ENCODE measurements at regions of chr21 and their contacts with region 1.

Region 1: GRCh38 chr21:33924079-33924765 is 8.6 kb upstream of the ATP5PO start:
- DNase-seq: no peak
- H3K4me3 ChIP-seq: no peak overlapping the region
- CTCF ChIP-seq: peak; percentile 88

Region 2: GRCh38 chr21:33899199-33899598 is 25.0 kb before region 1 on chr21:
- CTCF ChIA-PET with region 1: no interaction called
- POLR2A ChIA-PET with region 1: no interaction called
- DNase-seq: no peak
- H3K4me3 ChIP-seq: no peak overlapping the region
- CTCF ChIP-seq: no peak

Region 3: DNA sequence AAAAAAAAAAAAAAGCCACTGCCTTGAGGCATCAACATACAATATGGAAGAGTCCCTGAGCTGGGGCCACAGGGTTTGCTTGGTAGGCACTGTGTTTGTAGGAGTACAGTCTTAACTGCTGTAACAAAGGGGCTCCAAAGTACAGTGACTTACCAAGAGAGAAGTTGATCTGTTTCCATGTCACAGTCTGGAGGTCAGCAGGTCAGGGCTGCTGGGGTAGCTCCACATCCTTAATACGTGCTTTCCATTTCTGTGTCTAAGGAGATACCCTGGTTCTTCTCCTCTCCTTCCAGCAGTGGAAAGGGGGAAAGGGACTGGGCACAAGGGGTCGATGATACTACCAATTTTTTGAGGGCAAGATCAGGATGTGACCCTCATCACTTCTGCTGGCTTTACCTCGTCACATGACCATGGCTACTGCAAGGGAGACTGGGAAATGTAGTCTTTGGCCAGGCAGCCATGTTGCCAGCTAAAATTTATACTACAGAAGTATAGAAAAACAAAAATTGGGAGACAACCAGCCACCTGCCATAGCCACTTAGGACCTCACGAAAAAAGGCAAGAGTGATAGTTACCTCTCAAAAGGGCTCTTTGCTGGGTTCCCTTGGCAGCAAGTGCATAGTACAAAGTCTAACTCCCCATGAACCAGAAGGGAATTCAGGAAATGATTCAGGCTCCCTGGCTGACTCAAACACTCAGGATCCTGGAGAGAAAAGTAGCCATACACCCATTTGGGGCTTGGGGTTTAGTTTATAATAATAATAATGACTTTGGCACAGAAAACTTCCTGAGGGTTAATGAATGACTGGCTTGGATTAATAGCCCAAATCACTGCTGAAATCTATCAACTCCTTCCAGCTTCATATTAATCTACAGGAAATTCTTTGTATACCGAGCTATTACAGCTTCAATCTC is 44.1 kb after region 1 on chr21:
- CTCF ChIA-PET with region 1: interaction called, 16 read pairs
- POLR2A ChIA-PET with region 1: no interaction called
- DNase-seq: no peak
- H3K4me3 ChIP-seq: no peak overlapping the region; the same call in 1 of the 2 replicates
- CTCF ChIP-seq: no peak

Region 4: GRCh38 chr21:34091607-34092006 is 167.4 kb after region 1 on chr21:
- CTCF ChIA-PET with region 1: interaction called, 37 read pairs
- POLR2A ChIA-PET with region 1: no interaction called
- DNase-seq: no peak
- H3K4me3 ChIP-seq: no peak overlapping the region
- CTCF ChIP-seq: peak; percentile 17

Region 5: GRCh38 chr21:34202553-34203372 is 278.5 kb after region 1 on chr21:
- CTCF ChIA-PET with region 1: interaction called, 70 read pairs
- POLR2A ChIA-PET with region 1: no interaction called
- DNase-seq: no peak
- H3K4me3 ChIP-seq: peak overlapping the region; percentile 59
- CTCF ChIP-seq: no peak

Region 6: DNA sequence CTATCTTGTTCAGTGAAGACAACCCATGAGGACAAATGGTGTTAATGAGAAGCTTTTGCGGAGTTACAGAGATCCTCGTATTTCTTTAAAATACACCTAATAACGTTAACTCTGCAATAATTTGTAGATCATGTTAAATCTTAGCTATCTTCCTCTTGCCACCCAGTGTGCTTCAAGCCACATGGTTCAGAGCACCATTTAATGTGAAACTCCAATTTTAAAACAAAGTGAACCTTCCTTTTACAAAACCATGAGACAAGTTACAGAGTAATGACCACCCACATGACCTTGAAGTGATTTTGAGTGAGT is 437.9 kb after region 1 on chr21:
- CTCF ChIA-PET with region 1: interaction called, 20 read pairs
- POLR2A ChIA-PET with region 1: no interaction called
- DNase-seq: no peak
- H3K4me3 ChIP-seq: no peak overlapping the region
- CTCF ChIP-seq: no peak